Right ventricle myocardium superior (tissue), 1 donor: ENCODE measurements at regions of chr1 and their contacts with region 1.

Region 1: DNA sequence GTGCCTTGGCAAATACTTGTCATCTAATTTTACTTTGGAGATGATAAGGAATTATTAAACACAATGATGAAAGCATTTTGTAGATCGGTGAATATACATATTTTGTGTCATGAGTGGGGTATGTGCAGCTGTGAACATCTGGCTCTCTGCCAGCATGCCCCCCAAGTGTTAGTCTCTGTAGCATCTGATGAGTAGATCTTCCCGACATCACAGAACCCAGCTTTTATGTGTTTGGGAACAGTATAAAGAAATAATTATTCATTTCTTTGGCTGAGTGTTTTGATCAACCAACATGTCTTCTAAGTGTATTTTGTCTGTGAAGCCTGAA is 4.5 kb upstream of the CTNNBIP1 start:
- DNase-seq: no peak
- ATAC-seq: no peak

Region 2: GRCh38 chr1:9874959-9875635 is 39.5 kb before region 1 on chr1:
- intact Hi-C with region 1: loop called (anchors 2 kb)
- DNase-seq: peak; percentile 77
- ATAC-seq: peak; percentile 91

Region 3: DNA sequence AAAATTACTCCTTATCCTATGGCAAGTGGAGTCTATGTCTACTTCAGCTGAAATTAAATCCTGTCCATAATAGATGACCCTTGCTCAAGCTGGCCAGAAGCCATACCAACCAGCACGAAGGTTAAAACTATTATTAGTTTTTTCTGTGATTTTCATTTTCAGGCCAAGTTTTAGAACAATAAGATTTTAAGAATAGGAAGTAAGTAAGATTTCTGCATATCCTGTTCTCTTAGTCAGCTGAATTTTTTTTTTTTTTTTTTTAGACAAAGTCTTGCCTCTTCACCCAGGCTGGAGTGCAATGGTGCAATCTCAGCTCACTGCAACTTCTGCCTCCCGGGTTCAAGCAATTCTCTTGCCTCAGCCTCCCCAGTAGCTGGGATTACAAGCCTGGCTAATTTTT is 76.4 kb after region 1 on chr1:
- intact Hi-C with region 1: no loop called
- DNase-seq: no peak
- ATAC-seq: peak; percentile 63

Region 4: GRCh38 chr1:10045480-10046355 is 131.1 kb after region 1 on chr1:
- intact Hi-C with region 1: no loop called
- DNase-seq: no peak
- ATAC-seq: peak; percentile 32